H1 (cell line): ENCODE measurements at regions of chr10 and their contacts with region 1.

Region 1: GRCh38 chr10:102072673-102073527 is 7.8 kb downstream of the HPS6 start:
- DNase-seq: peak in 1 of 2 experiments; percentile 94
- H3K4me3 ChIP-seq: no peak overlapping the region
- H3K27ac ChIP-seq: no peak overlapping the region
- H3K4me1 ChIP-seq: 0 out of 7 replicates have a peak, but pooled peaks cover 0 to 2% (median 0%) of the 10 kb centered on the region in 4 experiments
- H3K27me3 ChIP-seq: no peaks in the 10 kb centered on the region; a peak in 1 of 7 replicates
- CTCF ChIP-seq: peak; percentile 89 to 95 (median 90)
- EP300 ChIP-seq: no peak
- POLR2A ChIP-seq: no peak
- RAD21 ChIP-seq: peak; percentile 86 to 89

Region 2: DNA sequence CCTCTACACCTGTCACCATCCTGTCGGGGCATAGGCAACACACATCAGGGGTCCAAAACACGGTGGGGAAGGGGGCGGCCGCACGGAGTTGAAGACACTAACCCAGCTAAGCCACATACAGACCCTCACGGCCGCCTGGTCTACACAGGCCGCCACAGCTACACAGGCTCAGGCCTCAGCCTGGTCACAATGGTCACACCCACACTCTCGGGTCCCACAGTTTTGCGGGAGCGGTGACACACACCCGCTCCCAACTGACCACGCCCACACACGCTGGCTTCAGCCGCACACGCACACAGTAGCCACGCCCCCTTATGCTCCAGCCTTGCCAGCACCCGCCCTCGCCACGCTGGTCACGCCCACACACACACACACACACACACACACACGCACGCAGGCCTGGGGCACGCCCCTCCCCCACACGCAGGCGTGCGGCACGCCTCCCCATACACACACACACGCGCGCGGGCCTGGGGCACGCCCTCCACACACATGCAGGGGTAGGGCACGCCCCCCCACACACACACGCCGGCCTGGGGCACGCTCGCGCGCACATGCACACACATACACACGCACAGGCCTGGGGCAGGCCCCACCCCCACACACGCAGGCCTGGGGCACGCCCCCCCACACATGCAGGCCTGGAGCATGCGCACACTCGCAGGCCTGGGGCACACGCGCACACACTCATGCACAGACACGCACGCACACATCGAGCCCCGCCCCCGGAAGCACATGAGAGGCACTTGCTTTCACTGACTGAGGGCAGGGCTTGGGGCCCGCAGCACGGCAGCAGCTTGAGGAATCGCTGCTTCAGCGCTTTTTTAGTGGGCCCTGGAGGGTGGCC is 242.4 kb before region 1 on chr10:
- CTCF ChIA-PET with region 1: interaction called, 10 read pairs
- POLR2A ChIA-PET with region 1: no interaction called
- DNase-seq: peak in 1 of 2 experiments; percentile 90
- H3K4me3 ChIP-seq: peak overlapping the region; percentile 44 to 66 (median 48)
- H3K27ac ChIP-seq: no peak overlapping the region
- H3K4me1 ChIP-seq: peaks cover 9 to 22% (median 17%) of the 10 kb centered on the region in 4 experiments
- H3K27me3 ChIP-seq: no peaks in the 10 kb centered on the region
- CTCF ChIP-seq: no peak
- EP300 ChIP-seq: no peak
- POLR2A ChIP-seq: no peak
- RAD21 ChIP-seq: no peak

Region 3: GRCh38 chr10:101987136-101987535 is 85.8 kb before region 1 on chr10:
- CTCF ChIA-PET with region 1: no interaction called
- POLR2A ChIA-PET with region 1: no interaction called
- DNase-seq: no peak
- H3K4me3 ChIP-seq: no peak overlapping the region
- H3K27ac ChIP-seq: no peak overlapping the region
- H3K4me1 ChIP-seq: no peaks in the 10 kb centered on the region
- H3K27me3 ChIP-seq: no peaks in the 10 kb centered on the region
- CTCF ChIP-seq: no peak
- EP300 ChIP-seq: no peak
- POLR2A ChIP-seq: no peak
- RAD21 ChIP-seq: no peak

Region 4: GRCh38 chr10:102040305-102041050 is 32.4 kb before region 1 on chr10:
- CTCF ChIA-PET with region 1: interaction called, 11 read pairs
- POLR2A ChIA-PET with region 1: no interaction called
- DNase-seq: no peak
- H3K4me3 ChIP-seq: no peak overlapping the region
- H3K27ac ChIP-seq: no peak overlapping the region
- H3K4me1 ChIP-seq: no peaks in the 10 kb centered on the region
- H3K27me3 ChIP-seq: no peaks in the 10 kb centered on the region
- CTCF ChIP-seq: no peak
- EP300 ChIP-seq: no peak
- POLR2A ChIP-seq: no peak
- RAD21 ChIP-seq: no peak

Region 5: DNA sequence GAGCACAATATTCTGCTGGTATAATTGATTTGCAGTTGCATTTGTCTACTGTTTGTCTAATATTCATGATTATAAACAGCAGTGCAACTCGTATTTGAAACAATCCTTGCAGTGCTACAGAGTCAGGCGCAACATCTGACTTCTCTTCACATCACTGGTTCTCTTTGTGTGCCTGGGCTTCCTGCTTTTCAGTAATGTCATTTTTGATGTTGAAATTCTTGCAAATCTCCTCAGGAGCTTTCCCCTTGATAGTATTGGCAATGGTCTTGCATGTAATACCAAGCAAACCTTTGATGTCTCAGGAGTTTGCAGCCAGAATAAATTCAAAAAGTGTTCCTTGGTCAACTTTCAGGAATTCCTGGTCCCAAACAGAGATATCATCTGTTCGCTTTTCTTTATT is 12.4 kb after region 1 on chr10:
- CTCF ChIA-PET with region 1: interaction called, 72 read pairs
- POLR2A ChIA-PET with region 1: interaction called, 5 read pairs
- DNase-seq: no peak
- H3K4me3 ChIP-seq: no peak overlapping the region
- H3K27ac ChIP-seq: no peak overlapping the region
- H3K4me1 ChIP-seq: no peaks in the 10 kb centered on the region
- H3K27me3 ChIP-seq: no peaks in the 10 kb centered on the region
- CTCF ChIP-seq: no peak
- EP300 ChIP-seq: no peak
- POLR2A ChIP-seq: no peak
- RAD21 ChIP-seq: no peak

Region 6: GRCh38 chr10:102106998-102107397 is 34.1 kb after region 1 on chr10:
- CTCF ChIA-PET with region 1: interaction called, 33 read pairs
- POLR2A ChIA-PET with region 1: interaction called, 3 read pairs
- DNase-seq: no peak
- H3K4me3 ChIP-seq: no peak overlapping the region
- H3K27ac ChIP-seq: no peak overlapping the region
- H3K4me1 ChIP-seq: no peaks in the 10 kb centered on the region; a peak in 1 of 7 replicates
- H3K27me3 ChIP-seq: no peaks in the 10 kb centered on the region
- CTCF ChIP-seq: no peak
- EP300 ChIP-seq: no peak
- POLR2A ChIP-seq: no peak
- RAD21 ChIP-seq: no peak